Posterior vena cava (tissue), 2 donors: ENCODE measurements at regions of chr5 and their contacts with region 1.

Region 1: DNA sequence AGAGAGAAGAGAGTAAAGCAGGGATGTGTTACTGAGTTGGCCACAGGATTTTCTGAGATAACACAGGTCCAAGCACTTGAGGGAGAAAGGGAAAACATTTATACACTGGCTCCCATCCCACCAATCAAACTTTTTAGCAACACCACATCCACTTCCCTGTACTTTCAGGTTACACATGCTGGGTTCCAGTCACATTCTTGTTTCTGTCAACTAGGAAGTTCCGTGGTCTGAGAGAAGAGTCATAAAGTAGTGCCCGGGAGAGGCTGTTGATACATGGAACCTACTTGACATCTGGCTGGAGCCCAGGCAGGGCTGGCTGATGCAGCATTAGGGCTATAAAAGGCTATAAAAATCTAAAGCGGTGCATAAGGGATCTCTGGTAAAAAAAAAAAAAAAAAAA is 473.9 kb upstream of the COX7C start:
- DNase-seq: no peak

Region 2: GRCh38 chr5:86070719-86071118 is 73.1 kb before region 1 on chr5:
- intact Hi-C with region 1: no loop called
- DNase-seq: no peak

Region 3: GRCh38 chr5:86101968-86102367 is 41.9 kb before region 1 on chr5:
- intact Hi-C with region 1: loop called in 1 of 2 experiments (anchors 2 kb)
- DNase-seq: peak; percentile 60

Region 4: GRCh38 chr5:88045165-88045564 is 1901.3 kb after region 1 on chr5:
- intact Hi-C with region 1: no loop called
- DNase-seq: no peak